Breast epithelium (tissue), 4 donors: ENCODE measurements at regions of chr12 and their contacts with region 1.

Region 1: GRCh38 chr12:47963340-47964040 is at the start of gene TMEM106C:
- DNase-seq: peak; percentile 83 to 87
- H3K4me3 ChIP-seq: peak within 1 kb of the TSS; percentile 68 to 85 (median 81)
- H3K27ac ChIP-seq: peak within 1 kb of the TSS; percentile 66 to 78
- H3K4me1 ChIP-seq: no peaks in the 10 kb centered on the region
- H3K27me3 ChIP-seq: no peaks in the 10 kb centered on the region
- CTCF ChIP-seq: peak; percentile 90 to 96 (median 95)
- POLR2A ChIP-seq: peak; percentile 24
- total RNA-seq, gene TMEM106C: 35.2 to 131 (median 73.4) TPM

Region 2: GRCh38 chr12:47940773-47941493 is 22.6 kb before region 1 on chr12:
- intact Hi-C with region 1: loop called (anchors 1 kb)
- DNase-seq: no peak
- H3K4me3 ChIP-seq: no peak overlapping the region
- H3K27ac ChIP-seq: no peak overlapping the region
- H3K4me1 ChIP-seq: peaks cover 0 to 4% of the 10 kb centered on the region in 2 donors
- H3K27me3 ChIP-seq: no peaks in the 10 kb centered on the region
- CTCF ChIP-seq: no peak
- POLR2A ChIP-seq: no peak